ENCODE measurements at regions of chr14 and their contacts with region 1.

Region 1: DNA sequence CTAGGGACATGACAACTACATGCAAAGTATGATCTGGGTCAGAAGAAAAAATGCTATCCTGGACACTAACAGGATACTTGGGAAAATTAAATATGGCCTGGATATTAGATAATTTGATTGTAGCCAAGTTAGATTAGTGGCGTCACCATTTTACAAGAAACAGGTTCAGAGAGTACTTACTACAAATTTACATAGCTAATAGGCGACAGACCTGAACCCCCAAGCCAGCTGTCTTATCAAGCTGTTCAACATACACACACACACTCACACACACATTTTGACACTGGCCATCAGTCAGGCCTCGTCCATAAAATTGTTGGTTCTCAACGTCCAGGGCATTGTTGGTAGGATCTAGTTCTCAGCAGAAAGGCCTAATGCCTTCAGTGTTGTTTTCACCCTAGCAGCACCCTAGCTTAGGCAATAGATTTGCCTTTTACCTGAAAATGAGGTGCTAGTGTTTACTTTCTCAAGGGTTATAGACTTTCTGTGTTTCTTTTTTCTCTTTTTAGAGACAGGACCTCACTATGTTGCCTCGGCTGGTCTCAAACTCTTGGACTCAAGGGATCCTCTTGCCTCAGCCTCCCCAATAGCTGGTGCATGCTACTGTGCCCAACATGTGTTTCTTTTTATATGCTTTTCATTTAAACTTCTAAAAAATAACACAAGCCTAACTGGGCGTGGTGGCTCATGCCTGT is 3.3 kb upstream of the C14orf93 start:
- DNase-seq: no peak
- ATAC-seq: no peak
- H3K4me3 ChIP-seq: no peak overlapping the region
- H3K4me3 Mint-ChIP-seq: no peak overlapping the region
- H3K27ac ChIP-seq: no peak overlapping the region
- H3K27ac Mint-ChIP-seq: no peak overlapping the region
- H3K4me1 ChIP-seq: peaks cover 10 to 18% of the 10 kb centered on the region in 2 donors
- H3K4me1 Mint-ChIP-seq: peaks cover 21% of the 10 kb centered on the region
- H3K27me3 ChIP-seq: no peaks in the 10 kb centered on the region
- H3K27me3 Mint-ChIP-seq: no peaks in the 10 kb centered on the region
- CTCF ChIP-seq: no peak

Region 2: DNA sequence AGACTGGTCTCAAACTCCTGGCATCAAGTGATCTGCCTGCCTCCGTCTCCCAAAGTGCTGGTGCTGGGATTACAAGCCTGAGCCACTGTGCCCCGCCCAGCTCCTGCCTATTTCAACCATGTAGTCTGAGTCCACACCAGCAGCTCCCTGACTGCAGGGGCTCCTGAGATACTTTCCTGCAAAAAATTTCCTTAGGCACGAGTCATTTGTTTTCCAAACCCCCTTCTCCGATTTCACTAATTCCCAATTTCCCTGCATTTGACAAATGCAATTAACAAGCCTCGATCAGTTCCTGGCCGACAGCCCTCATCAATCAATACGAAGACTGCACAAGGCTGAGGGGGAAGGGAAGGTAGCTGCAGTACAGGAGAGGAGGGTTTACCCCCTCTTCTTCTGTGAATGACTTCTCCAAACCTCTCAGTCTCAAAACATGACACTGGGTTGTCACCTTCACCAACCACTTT is 11.4 kb after region 1 on chr14:
- CTCF ChIA-PET with region 1: interaction called, 4 read pairs
- POLR2A ChIA-PET with region 1: interaction called, 12 read pairs
- intact Hi-C with region 1: no loop called
- DNase-seq: no peak
- ATAC-seq: no peak
- H3K4me3 ChIP-seq: no peak overlapping the region
- H3K4me3 Mint-ChIP-seq: no peak overlapping the region
- H3K27ac ChIP-seq: no peak overlapping the region
- H3K27ac Mint-ChIP-seq: no peak overlapping the region
- H3K4me1 ChIP-seq: peaks cover 0 to 3% of the 10 kb centered on the region in 2 donors
- H3K4me1 Mint-ChIP-seq: peaks cover 11% of the 10 kb centered on the region
- H3K27me3 ChIP-seq: no peaks in the 10 kb centered on the region
- H3K27me3 Mint-ChIP-seq: no peaks in the 10 kb centered on the region
- CTCF ChIP-seq: no peak

Region 3: DNA sequence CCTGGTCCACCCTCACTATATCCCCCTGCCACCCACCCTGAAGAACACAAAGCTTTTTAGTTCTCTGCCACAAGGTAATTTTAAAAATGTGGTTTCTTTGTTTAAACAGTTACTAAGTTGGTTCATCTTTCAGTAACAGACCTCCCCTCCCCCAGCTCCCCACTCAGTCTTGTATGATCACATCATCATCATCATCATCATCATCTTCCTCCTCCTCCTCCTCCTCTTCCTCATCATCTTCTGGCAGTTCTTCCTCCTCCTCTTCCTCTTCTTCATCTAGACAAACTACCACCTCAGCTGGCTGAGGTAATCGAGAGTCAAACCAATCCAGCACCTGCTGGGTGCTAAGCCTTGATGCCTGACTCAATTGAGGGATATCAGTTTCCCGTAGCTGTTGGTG is 262.2 kb after region 1 on chr14:
- CTCF ChIA-PET with region 1: no interaction called
- POLR2A ChIA-PET with region 1: no interaction called
- intact Hi-C with region 1: no loop called
- DNase-seq: no peak
- ATAC-seq: no peak
- H3K4me3 ChIP-seq: no peak overlapping the region
- H3K4me3 Mint-ChIP-seq: no peak overlapping the region
- H3K27ac ChIP-seq: no peak overlapping the region
- H3K27ac Mint-ChIP-seq: no peak overlapping the region
- H3K4me1 ChIP-seq: no peaks in the 10 kb centered on the region
- H3K4me1 Mint-ChIP-seq: peaks cover 2% of the 10 kb centered on the region
- H3K27me3 ChIP-seq: no peaks in the 10 kb centered on the region
- H3K27me3 Mint-ChIP-seq: no peaks in the 10 kb centered on the region
- CTCF ChIP-seq: no peak